Cardiac septum (tissue), 1 donor: ENCODE measurements at regions of chr11 and their contacts with region 1.

Region 1: GRCh38 chr11:76919887-76920746 is 59.4 kb downstream of the ACER3 start:
- DNase-seq: peak; percentile 85

Region 2: GRCh38 chr11:76694664-76695063 is 225.5 kb before region 1 on chr11:
- intact Hi-C with region 1: no loop called
- DNase-seq: no peak

Region 3: DNA sequence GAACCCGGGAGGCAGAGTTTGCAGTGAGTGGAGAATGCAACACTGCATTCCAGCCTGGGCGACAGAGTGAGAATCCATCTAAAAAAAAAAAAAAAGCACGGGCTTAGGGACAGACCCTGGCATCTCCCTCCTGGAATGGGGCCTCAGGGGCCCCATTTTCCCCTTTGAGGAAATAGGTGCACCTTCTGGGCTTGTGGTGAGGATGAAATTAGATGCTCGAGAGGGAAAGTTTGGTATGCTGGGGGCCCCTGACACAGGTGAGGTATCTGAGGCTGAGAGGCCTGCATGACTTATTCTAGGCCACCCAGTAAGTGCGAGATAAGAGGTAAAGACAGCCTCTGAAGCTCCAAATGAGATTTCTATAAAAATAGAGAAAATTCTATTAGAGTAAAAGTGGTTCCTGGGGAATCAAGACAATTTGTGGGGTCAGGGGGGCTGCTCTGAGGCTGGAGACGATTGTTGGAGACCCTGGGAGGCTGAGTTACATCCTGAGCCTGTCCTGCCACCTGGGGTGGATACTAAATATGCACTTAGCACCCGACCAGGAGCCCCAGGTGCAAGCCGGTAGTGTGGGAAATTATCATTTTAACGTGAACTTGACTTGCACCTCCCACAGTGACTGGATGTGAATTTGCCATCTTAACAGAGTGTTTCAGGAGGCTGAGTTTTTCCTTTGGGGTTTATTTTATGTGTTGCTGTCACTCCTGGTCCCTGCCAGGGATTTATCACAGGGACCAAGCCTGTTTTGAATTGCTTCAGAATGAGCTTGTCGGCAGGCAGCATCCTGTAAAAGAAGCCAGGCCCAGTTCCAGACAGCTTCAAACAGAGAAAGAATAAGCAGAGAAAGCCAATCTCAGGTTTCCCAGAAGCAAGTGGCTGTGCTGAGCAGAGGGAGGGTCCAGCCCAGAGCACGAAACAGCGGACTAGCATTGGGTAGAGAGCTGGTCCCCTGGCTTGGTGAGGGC is 185.4 kb before region 1 on chr11:
- intact Hi-C with region 1: loop called (anchors 5 kb)
- DNase-seq: no peak

Region 4: GRCh38 chr11:76807206-76807875 is 112.8 kb before region 1 on chr11:
- intact Hi-C with region 1: loop called (anchors 1 kb)
- DNase-seq: peak; percentile 87

Region 5: DNA sequence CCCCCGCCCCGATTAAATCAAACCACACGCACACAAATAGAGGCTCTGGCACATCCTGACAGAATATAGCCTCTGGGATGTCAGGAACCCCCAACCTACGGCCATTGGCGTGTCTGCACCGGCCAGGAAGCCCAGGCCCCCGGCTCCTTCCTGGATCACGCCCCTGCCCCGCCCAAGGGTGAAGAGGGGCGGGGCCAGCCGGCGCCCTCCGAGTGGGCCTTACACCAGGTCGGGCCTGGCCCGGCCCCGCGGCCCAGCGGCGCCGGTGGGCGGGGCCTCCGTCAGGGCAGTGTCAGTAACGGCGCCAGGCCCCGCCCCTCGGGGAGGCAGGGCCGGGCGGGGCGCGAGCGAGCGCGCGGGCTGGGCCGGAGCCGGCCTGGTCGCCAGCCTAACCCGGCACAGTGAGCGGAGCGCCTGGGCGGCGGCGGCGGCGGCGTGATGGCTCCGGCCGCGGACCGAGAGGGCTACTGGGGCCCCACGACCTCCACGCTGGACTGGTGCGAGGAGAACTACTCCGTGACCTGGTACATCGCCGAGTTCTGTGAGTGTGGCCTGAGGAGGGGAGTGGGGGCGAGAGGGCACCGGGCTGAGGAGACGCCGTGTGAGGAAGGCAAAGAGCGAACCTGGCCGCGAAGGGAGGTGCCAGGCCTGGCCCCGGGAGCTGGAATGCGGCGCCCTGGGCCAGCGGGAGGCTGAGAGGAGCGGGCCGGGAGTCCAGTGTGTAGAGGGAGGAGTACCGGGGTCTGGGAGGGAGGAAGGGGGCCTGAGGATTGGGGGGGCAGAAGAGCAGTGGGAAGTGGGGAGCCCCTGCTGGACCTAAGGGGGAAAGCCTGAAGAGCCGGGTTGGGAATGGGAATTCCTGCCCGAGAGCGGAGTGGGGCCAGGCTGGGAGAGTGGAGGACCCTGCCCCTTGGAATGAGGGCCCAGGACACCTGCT is 59.3 kb before region 1 on chr11 and contains the start of gene ACER3:
- intact Hi-C with region 1: loop called (anchors 10 kb)
- DNase-seq: peak; percentile 96
- total RNA-seq, gene ACER3: 9.7 TPM

Region 6: DNA sequence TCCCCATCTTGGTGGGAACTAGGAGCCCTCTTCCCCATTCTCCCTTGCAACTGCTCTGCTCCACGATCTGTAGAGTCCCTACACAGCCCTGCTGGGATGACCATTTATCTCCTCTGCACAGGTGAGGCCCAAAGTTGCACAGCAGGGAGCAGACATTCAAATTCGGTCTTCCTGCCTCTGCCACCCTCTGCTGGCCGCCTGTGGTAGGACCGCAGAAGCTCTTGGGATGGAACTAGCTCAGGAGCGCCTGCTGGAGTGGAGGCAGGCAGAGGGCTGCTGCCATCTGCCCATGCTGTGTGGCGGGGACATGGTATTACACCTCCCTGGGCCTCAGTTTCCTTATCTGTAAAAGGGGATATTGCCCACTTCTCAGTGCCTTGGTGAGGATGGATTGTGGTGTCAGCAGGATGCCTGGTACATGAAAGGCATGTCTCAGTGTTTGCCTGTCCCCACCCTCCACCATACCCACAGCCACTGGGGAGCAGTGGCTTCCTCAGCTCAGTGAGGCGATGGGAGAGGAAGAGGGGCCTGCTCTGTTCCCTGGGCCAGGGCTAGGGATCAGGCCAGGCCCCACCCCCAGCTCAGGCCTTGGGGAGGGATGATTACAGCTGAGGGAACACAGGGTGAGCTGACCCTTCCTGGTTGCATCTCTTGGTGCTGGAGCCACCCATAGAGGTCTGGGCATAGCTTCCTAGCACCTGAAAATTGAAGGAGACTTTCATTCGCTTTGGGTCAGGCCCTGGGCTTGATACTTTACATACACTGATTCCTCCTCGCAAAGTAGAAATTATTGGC is 171.2 kb after region 1 on chr11:
- intact Hi-C with region 1: loop called (anchors 10 kb)
- DNase-seq: no peak